Posterior cingulate gyrus (tissue), 11 donors: ENCODE measurements at regions of chr9 and their contacts with region 1.

Region 1: GRCh38 chr9:127351182-127352166 is 45.5 kb upstream of the SLC2A8 start:
- DNase-seq: no peak

Region 2: GRCh38 chr9:127370672-127371648 is 19.5 kb after region 1 on chr9:
- intact Hi-C with region 1: loop called (anchors 1 kb)
- DNase-seq: peak in 1 of 10 donors; percentile 81